Common myeloid progenitor, CD34-positive (primary cell): ENCODE measurements at regions of chr18 and their contacts with region 1.

Region 1: GRCh38 chr18:3245853-3246634 is 1.6 kb upstream of the MYL12A start:
- DNase-seq: peak; percentile 90 to 95 (median 94)
- H3K4me3 ChIP-seq: peak overlapping the region; percentile 80 to 99 (median 93)
- H3K27ac ChIP-seq: peak overlapping the region; percentile 95 to 98
- H3K4me1 ChIP-seq: peaks cover 23 to 46% (median 37%) of the 10 kb centered on the region in 4 experiments
- H3K27me3 ChIP-seq: no peaks in the 10 kb centered on the region

Region 2: DNA sequence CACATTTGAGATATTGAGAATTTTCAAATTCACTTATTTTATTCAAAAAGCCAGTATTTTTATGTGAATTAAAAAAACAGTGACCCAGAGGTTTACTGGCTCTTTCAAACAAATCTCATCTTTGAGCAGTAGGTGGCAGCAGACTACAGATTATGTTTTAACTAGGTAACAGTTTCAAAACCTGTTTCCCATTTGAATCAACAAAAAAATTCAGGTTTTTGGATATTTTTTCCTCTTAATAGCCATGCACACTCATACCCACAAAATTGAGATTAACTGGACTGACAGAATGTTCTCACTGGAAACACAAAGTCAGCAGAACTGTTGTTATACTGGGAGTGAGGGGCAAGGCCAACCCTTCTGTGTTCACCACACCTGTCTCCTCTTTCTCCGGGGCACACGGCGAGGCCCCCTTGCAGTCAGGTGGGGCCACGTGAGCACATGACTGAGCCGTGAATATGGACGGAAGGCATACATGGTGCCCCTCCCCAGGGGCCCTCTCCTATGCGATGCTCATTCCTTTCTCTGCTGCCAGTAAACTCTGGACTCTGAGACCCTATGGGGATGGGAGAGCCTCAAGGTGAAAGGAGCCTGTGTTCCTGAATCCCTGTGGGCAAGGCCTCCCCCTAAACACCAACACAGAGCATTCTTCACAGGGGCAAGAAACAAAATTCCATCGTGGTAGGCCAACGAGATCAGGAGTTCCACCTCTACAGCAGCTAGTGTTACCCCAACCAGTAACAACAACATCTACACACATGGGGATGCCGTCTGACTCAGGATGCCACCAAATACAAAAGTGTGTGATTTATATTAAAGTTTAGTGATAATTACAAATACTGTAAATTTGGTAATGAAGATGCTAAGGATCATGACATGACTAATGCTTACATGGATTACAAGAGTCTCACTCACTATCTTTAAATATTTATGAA is 313.5 kb before region 1 on chr18:
- CTCF ChIA-PET with region 1: interaction called, 64 read pairs
- POLR2A ChIA-PET with region 1: interaction called, 3 read pairs
- DNase-seq: peak; percentile 68 to 88 (median 79)
- H3K4me3 ChIP-seq: no peak overlapping the region
- H3K27ac ChIP-seq: no peak overlapping the region
- H3K4me1 ChIP-seq: peaks cover 0 to 7% (median 0%) of the 10 kb centered on the region in 4 experiments
- H3K27me3 ChIP-seq: no peaks in the 10 kb centered on the region

Region 3: DNA sequence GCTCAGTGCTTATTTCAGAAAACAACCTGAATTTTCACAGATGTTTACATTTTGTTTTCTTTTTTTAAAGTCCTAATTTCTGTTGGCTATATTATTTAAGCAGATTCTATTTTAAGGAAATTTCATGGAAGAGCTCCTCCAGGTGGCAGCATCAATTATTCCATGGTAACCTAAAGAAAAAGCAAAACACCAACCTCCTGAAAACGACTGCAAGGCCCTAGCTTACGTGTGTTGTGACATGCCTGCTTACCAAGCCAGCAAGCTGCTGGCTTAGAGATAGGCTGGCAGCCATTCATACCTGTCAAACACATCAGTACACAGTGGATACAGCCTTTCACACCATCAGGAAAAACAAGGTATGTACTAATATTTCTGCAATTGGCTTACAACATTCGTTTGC is 298.0 kb before region 1 on chr18:
- CTCF ChIA-PET with region 1: interaction called, 15 read pairs
- POLR2A ChIA-PET with region 1: no interaction called
- DNase-seq: peak; percentile 47 to 71 (median 59)
- H3K4me3 ChIP-seq: no peak overlapping the region
- H3K27ac ChIP-seq: no peak overlapping the region
- H3K4me1 ChIP-seq: peaks cover 0 to 5% (median 0%) of the 10 kb centered on the region in 4 experiments
- H3K27me3 ChIP-seq: no peaks in the 10 kb centered on the region

Region 4: DNA sequence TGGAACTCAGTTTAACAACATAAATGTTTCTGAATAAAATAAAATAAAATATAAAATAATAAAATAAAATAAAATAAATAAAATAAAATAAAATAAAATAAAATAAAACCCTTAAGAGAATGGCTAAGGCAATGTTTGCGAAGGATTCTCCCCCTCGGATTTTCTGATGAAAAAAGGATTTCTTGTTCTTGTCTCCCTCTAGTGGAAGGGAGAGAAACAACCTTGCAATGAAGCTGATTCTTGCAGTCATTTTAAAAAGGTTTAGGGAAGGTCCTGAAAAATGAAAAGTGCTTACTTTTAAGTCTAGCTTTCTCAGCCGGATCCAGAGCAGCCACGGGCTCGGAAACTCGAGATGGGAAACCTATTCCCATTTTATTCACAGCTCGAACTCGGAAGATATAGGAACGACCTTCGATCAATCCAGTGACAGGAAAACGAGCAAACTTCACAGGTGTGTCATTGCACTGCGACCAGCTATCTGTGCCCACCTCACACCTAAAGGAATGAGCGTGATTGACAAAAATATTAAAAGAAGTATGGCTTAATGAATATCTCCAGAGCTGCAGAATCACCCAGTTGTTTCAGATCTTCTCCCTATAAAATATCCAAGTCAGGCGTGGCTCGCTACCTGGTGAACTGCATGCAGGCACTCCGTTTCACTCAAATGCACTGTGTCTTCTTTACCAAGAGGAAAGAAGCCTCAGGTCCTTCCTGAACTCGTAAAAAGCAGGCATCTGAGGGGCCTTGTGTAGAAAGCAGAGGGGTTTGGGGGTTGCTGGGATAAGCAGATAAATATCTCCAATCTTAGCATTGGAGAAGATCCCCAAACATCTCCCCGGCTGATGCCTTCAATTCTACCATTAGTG is 94.4 kb before region 1 on chr18:
- CTCF ChIA-PET with region 1: interaction called, 43 read pairs
- POLR2A ChIA-PET with region 1: interaction called, 5 read pairs
- DNase-seq: peak; percentile 49 to 79 (median 76)
- H3K4me3 ChIP-seq: no peak overlapping the region
- H3K27ac ChIP-seq: no peak overlapping the region
- H3K4me1 ChIP-seq: no peaks in the 10 kb centered on the region
- H3K27me3 ChIP-seq: no peaks in the 10 kb centered on the region

Region 5: GRCh38 chr18:3261371-3262246 is 15.6 kb after region 1 on chr18 and contains the start of gene MYL12B:
- CTCF ChIA-PET with region 1: interaction called, 68 read pairs
- POLR2A ChIA-PET with region 1: interaction called, 90 read pairs
- DNase-seq: peak; percentile 89 to 96 (median 93)
- H3K4me3 ChIP-seq: peak within 1 kb of the TSS; percentile 83 to 99 (median 90)
- H3K27ac ChIP-seq: peak within 1 kb of the TSS; percentile 95 to 99
- H3K4me1 ChIP-seq: peaks cover 33 to 57% (median 42%) of the 10 kb centered on the region in 4 experiments
- H3K27me3 ChIP-seq: no peaks in the 10 kb centered on the region